ENCODE measurements at regions of chr4 and their contacts with region 1.

Region 1: GRCh38 chr4:55948726-55949474 is at the start of gene CEP135:
- DNase-seq: peak; percentile 91
- H3K4me3 Mint-ChIP-seq: peak within 1 kb of the TSS; percentile 83
- H3K27ac Mint-ChIP-seq: peak within 1 kb of the TSS; percentile 93
- H3K4me1 Mint-ChIP-seq: peaks cover 30% of the 10 kb centered on the region
- H3K27me3 Mint-ChIP-seq: no peaks in the 10 kb centered on the region
- total RNA-seq, gene CEP135: 13.3 and 15.7 TPM in 2 replicates

Region 2: DNA sequence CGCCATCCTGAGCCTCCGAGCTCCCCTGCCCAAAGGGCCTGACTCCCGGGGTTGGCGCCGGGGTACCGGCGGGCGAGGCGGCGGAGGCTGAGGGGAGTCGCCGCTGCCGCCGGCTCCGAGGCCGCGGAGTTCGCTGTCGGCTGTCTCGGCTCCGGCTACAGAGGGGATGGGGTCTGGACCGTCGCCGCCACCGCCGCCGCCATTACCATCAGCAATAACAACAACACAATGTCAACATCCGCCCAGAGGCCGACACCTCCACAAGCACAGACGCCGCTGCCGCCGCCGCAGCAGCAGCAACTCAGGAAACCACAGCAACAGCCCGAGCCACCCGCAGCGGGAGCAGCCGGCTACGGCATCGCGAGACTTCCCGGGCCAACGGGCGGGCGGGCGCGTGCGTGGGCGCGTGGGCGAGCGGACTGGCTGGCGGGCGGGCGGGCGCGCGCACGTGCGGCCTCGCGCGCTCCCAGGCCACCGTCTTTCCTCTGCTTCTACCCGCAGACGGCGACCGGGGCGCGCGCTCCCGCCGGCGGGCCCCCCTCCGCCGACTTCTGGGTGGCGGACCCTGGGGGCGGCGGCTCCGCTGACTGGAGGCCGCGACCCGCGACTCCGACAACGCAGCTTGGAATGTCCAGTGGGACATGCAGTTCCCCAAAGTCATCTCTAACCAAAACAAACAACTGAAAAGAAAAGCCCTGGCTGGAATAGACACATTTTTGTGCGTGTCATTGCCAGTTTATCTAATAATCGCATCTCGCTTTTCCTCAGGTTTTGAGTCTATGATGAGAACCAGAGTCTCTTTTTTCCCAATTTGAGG is 1884.4 kb before region 1 on chr4 and contains the start of gene CHIC2:
- intact Hi-C with region 1: loop called (anchors 5 kb)
- DNase-seq: peak; percentile 96
- H3K4me3 Mint-ChIP-seq: peak within 1 kb of the TSS; percentile 92
- H3K27ac Mint-ChIP-seq: peak within 1 kb of the TSS; percentile 87
- H3K4me1 Mint-ChIP-seq: peaks cover 48% of the 10 kb centered on the region
- H3K27me3 Mint-ChIP-seq: peaks cover 3% of the 10 kb centered on the region
- total RNA-seq, gene CHIC2: 18.8 and 22.5 TPM in 2 replicates

Region 3: DNA sequence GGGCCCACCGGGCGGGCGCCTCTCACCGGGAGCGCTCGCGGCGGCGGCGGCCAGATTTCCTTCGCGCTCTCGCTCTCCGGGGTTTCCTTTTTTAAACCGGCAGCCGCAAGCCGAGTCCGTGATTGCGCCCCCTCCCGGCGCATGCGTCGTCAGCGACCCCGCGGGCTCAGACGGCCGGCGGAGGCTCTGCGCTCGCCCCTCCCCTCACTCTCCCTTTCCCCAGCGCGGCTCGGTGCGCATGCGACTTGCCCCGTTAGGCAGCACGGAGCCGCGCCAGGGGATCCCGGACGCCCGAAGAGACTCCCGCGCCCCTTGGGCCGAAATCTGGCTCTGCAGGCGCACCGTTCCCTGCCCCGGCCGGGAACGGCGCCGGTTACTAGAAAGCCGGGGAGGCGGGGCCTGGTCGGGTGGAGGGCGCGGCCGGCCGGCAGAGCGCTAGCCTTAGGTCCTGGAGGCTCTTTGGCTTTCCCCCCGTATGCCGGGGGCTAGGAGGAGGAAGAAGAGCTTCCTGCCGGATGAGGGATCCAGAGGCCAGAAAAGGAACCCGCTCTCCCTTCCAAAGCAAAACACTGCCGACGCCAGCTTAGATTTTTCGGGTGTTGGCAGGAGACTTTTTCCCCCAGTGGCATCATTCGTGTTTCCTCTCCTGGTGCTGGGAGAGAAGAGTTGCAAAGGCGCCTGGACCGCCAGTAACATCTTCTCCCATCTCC is 402.0 kb before region 1 on chr4 and contains the start of gene CLOCK:
- intact Hi-C with region 1: loop called (anchors 5 kb)
- DNase-seq: peak; percentile 80
- H3K4me3 Mint-ChIP-seq: peak within 1 kb of the TSS; percentile 86
- H3K27ac Mint-ChIP-seq: peak within 1 kb of the TSS; percentile 79
- H3K4me1 Mint-ChIP-seq: peaks cover 38% of the 10 kb centered on the region
- H3K27me3 Mint-ChIP-seq: peaks cover 45% of the 10 kb centered on the region
- total RNA-seq, gene CLOCK: 7.2 and 7.4 TPM in 2 replicates

Region 4: DNA sequence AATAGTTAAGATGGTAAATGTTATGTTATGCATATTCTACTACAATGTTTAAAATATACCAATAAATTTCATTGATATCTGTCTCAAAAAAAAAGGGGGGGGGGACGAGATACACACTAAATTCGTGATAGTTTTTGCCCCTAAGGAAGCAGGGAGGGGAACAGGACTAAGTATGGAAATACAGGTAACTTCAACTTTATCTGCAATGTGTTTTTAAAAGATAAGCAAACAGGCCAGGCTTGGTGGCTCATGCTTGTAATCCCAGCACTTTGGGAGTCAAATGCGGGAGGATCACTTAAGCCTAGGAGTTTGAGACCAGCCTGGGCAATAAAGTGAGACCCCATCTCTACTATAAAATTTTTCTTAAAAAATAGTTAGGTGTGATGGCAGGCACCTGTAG is 388.8 kb before region 1 on chr4:
- intact Hi-C with region 1: no loop called
- DNase-seq: no peak
- H3K4me3 Mint-ChIP-seq: no peak overlapping the region
- H3K27ac Mint-ChIP-seq: no peak overlapping the region
- H3K4me1 Mint-ChIP-seq: peaks cover 7% of the 10 kb centered on the region
- H3K27me3 Mint-ChIP-seq: peaks cover 13% of the 10 kb centered on the region

Region 5: GRCh38 chr4:55993994-55994663 is 45.2 kb after region 1 on chr4:
- intact Hi-C with region 1: loop called (anchors 1 kb)
- DNase-seq: no peak
- H3K4me3 Mint-ChIP-seq: no peak overlapping the region
- H3K27ac Mint-ChIP-seq: peak overlapping the region; percentile 37
- H3K4me1 Mint-ChIP-seq: peaks cover 26% of the 10 kb centered on the region
- H3K27me3 Mint-ChIP-seq: no peaks in the 10 kb centered on the region

Region 6: DNA sequence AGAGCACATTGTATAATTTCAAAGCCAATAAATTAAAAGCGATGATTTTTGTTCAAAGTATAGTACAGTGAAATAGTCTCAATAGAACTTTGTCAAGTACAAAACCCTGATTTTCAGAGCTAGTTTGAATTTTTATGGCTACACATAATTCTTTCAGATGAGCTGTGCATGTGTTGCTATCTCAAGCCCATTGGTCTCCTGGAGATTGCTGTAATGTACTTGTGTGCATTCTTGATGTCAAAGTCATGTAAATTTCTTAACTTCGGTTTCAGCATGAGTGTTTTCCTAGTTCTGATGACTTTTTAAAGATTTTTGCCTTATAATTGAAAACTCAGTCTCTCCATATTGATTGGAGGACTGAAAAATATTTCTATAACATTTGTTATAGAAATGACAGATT is 200.7 kb after region 1 on chr4:
- intact Hi-C with region 1: no loop called
- DNase-seq: no peak
- H3K4me3 Mint-ChIP-seq: no peak overlapping the region
- H3K27ac Mint-ChIP-seq: no peak overlapping the region
- H3K4me1 Mint-ChIP-seq: peaks cover 1% of the 10 kb centered on the region
- H3K27me3 Mint-ChIP-seq: peaks cover 2% of the 10 kb centered on the region

Region 7: DNA sequence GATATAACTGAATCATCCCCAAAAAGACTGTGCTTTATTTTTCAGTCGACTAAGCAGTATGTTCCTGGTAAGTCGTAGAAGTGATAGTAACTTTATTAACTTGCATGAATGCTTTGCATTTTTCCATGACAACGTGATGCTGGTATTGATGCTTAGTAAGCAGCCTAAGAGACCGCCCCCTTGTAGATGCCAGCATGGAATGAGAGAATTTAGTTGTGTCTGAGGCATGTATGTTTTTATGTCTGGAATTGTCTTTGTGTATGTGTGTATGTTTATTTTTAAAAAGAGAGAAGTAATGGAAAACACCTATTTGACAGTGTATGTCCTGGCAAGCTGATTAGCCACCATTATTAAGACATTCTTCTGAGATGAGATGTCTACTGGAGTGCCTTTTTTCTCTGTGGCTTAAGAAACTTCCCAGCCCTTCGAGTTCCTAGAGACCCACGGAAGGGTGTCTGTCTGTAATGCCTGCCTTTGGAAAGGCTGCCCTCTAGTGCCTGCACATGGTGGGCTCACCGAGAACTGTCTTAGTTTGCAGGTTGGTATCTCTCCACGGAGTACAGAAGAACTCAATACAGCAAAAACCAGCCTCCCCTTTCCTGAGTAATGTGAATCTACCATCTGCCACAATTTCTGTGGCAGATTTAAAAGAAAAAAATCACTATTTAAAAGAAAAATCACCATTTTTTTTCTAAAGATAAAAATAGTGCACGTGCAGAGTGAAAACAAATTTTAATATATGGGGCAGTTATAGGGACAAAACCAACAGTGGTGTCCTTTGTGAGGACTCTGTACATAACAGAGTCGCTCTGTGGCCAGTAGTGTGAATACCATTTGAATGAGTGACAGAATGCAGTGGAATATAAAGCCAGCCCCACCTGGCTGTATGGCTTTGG is 352.5 kb after region 1 on chr4:
- intact Hi-C with region 1: loop called (anchors 1 kb)
- DNase-seq: peak; percentile 55
- H3K4me3 Mint-ChIP-seq: peak overlapping the region; percentile 15
- H3K27ac Mint-ChIP-seq: no peak overlapping the region
- H3K4me1 Mint-ChIP-seq: peaks cover 12% of the 10 kb centered on the region
- H3K27me3 Mint-ChIP-seq: peaks cover 15% of the 10 kb centered on the region

Region 8: DNA sequence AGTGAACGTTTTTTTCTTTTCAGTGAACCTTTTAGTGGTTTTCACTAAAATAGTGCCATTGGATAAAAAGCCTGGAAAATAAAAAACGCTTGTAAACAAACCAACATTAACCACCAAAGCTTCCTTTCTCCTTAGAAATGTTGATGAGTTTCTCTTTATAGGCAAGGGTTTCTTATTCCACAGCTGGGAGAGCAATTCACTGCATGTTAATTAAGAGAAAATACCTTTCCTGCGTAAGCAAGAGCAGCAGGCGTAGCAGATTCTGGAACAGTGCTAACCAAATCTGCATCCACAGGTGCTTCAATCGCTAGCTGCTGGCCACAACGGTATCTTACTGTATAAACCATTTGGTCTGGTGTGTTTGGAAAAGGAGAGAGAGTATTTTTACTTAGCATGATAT is 451.7 kb after region 1 on chr4:
- intact Hi-C with region 1: no loop called
- DNase-seq: no peak
- H3K4me3 Mint-ChIP-seq: no peak overlapping the region
- H3K27ac Mint-ChIP-seq: no peak overlapping the region
- H3K4me1 Mint-ChIP-seq: no peaks in the 10 kb centered on the region
- H3K27me3 Mint-ChIP-seq: no peaks in the 10 kb centered on the region

Region 9: DNA sequence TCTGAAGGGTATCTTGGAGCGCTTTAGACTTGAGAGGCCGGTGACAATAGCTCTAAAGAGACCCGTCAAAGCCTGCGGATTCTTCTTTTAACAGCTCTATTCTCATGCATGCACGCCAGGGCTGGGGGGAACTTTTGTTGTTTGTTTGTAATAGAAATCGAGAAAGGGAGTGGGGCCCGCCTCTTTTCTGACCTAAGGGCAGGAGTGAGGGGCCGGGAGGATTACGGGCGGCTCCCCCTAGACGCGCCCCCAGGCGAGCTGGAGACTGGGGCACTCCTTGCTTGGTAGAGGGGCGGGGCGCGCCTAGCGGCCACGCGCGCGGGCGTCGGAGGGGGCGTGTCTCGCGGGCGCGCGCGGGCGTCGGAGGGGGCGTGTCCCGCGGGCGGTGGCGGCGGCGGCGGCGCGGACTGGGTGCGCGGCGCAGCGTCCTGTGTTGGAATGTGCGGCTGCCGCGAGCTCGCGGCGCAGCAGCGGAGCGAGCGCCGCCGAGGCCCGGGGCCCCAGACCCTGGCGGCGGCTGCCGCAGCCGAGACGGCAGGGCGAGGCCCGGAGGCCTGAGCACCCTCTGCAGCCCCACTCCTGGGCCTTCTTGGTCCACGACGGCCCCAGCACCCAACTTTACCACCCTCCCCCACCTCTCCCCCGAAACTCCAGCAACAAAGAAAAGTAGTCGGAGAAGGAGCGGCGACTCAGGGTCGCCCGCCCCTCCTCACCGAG is 958.7 kb after region 1 on chr4 and contains the start of gene REST:
- intact Hi-C with region 1: loop called (anchors 2 kb)
- DNase-seq: peak; percentile 78
- H3K4me3 Mint-ChIP-seq: peak within 1 kb of the TSS; percentile 84
- H3K27ac Mint-ChIP-seq: peak within 1 kb of the TSS; percentile 72
- H3K4me1 Mint-ChIP-seq: peaks cover 34% of the 10 kb centered on the region
- H3K27me3 Mint-ChIP-seq: peaks cover 10% of the 10 kb centered on the region
- total RNA-seq, gene REST: 44.5 and 47.7 TPM in 2 replicates

Region 10: DNA sequence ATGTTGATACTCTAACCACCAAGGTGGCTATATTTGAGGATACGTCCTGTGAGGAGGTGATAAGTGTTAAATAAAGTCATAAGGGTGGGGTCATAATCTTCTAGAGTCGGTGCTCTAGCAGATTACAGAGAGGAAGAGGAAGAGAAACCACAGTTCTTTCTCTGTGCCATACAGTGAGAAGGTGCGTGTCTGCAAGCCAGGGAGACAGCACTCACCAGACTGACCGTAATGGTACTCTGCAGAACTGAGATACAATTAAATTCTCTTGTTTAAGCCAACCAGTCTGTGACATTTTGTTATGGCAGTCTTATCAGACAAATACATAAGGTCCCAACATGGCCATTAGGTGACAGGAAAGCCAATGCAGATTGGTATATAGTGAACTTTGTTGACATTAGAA is 1642.2 kb after region 1 on chr4:
- intact Hi-C with region 1: no loop called
- DNase-seq: no peak
- H3K4me3 Mint-ChIP-seq: no peak overlapping the region
- H3K27ac Mint-ChIP-seq: no peak overlapping the region
- H3K4me1 Mint-ChIP-seq: no peaks in the 10 kb centered on the region
- H3K27me3 Mint-ChIP-seq: no peaks in the 10 kb centered on the region